ENCODE measurements at regions of chr15 and their contacts with region 1.

Region 1: DNA sequence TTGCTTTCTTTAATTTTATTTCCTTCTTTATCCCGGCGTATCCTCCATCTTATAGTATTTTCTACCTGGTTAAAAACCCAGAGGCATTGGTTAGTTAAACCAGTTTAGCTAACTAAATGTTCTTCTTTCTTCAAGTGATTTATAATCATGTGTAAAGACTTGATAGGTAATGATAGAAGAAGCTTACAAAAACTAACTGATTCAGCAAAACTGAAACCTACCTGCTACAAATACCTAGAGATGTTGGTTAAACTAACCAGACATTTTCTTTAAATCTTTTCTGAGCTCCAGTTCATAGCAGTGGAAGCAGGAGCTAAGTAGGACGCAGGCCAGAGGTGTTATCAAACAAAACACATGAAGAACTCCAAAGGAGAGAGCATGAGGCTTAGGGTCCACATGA is 44.8 kb downstream of the LEO1 start:
- DNase-seq: no peak
- H3K4me3 Mint-ChIP-seq: no peak overlapping the region
- H3K27ac Mint-ChIP-seq: no peak overlapping the region
- H3K4me1 Mint-ChIP-seq: no peaks in the 10 kb centered on the region
- H3K27me3 Mint-ChIP-seq: no peaks in the 10 kb centered on the region

Region 2: DNA sequence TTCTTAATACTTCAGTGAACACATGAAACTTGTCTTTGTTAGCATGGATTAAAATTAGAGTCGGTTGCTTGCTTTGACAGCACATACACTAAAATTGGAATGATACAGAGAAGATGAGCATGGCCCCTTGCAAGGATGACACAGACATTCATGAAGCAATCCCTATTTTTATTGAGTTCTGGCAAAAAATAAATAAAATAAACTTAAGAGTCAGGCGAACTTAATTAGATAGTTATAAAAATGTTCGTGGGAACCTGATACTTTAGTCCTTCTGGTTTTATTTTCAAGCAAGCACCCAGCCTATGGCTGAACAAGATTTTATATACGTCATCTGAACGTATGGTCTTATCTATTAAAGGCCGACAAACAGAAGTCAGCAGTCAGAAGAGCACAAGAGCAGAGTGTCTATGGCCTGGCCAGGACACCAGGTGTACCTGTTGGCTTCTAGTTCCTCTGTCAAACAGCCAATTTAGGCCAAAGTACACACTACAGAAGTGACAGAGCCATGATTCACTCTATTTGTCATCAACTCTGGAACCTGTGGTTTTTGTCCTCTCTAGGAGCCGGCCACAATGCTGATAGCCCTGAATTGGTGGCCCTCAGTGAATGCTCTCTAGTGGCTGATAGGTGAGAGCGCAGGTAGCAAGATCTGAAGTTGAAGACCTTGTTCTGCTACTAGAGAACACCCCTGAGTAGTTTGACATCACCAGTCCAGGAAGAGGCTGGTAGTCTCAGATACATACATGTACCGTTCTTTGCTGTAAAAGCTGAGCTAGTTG is 19.5 kb before region 1 on chr15:
- intact Hi-C with region 1: loop called (anchors 1 kb)
- DNase-seq: no peak
- H3K4me3 Mint-ChIP-seq: no peak overlapping the region
- H3K27ac Mint-ChIP-seq: no peak overlapping the region
- H3K4me1 Mint-ChIP-seq: no peaks in the 10 kb centered on the region
- H3K27me3 Mint-ChIP-seq: no peaks in the 10 kb centered on the region

Measured in activated T-helper 1 cell treated with anti-CD3 and anti-CD28 coated beads, Interleukin-12 subunit alpha, Interleukin-12 subunit beta, Interleukin-2, Interleukin-4 antibody, amounts not matched to agents 30 ng/mL and 10 ng/mL and 1 ng/mL, durations not matched to agents 14 hours and 24 hours and 36 hours (primary cell).